Vagina (tissue), 2 donors: ENCODE measurements at regions of chrX and their contacts with region 1.

Region 1: GRCh38 chrX:103918581-103919269 is 43.7 kb upstream of the TMSB15B start:
- DNase-seq: no peak
- H3K4me3 ChIP-seq: peak overlapping the region; percentile 43 to 62
- H3K27ac ChIP-seq: peak overlapping the region; percentile 61
- H3K4me1 ChIP-seq: no peaks in the 10 kb centered on the region
- H3K27me3 ChIP-seq: no peaks in the 10 kb centered on the region
- CTCF ChIP-seq: no peak
- POLR2A ChIP-seq: no peak

Region 2: GRCh38 chrX:104007242-104007641 is 88.5 kb after region 1 on chrX:
- intact Hi-C with region 1: loop called (anchors 1 kb)
- DNase-seq: no peak
- H3K4me3 ChIP-seq: no peak overlapping the region
- H3K27ac ChIP-seq: no peak overlapping the region
- H3K4me1 ChIP-seq: no peaks in the 10 kb centered on the region
- H3K27me3 ChIP-seq: no peaks in the 10 kb centered on the region
- CTCF ChIP-seq: no peak
- POLR2A ChIP-seq: no peak